Pancreas (tissue), 10 donors: ENCODE measurements at regions of chrX and their contacts with region 1.

Region 1: DNA sequence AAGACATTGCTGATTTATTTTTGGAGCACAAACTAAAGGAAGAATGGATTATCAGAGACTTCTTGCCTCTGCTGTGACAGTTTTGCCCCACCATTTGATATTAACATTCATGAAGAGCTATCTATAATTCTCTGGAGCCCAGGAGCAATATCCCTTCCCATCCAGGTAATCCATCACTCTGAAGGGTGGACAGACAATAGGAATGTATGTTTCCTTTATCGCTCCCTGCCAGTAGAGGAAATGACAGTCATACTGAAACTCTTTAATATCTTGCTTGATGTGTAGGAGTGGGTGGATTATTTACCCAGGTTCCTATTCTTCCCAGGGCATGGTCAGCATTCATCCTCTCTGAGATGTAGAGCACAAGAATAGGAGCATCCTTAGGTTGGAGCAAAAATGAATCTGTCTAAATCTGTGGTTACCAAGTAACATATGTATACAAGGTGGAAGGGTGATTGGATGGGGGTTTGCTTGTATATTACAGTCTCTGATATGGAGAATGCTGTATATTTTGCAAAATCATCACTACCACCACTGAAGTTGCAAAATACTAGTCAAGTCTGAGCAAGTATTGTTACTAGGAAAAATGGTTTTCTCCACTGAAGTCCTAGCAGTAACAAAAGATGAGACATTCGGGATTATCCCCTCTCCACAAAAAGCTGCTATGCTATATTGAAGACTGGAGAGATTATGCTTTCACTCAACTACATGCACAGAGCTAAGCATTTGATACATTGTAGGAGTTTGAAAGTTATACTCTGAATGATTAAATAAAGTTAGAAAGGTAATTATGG is 151.6 kb downstream of the CBLL2 start:
- DNase-seq: no peak
- ATAC-seq: no peak
- H3K4me3 ChIP-seq: no peak overlapping the region
- H3K27ac ChIP-seq: no peak overlapping the region
- H3K4me1 ChIP-seq: no peaks in the 10 kb centered on the region
- H3K27me3 ChIP-seq: no peaks in the 10 kb centered on the region
- CTCF ChIP-seq: no peak

Region 2: DNA sequence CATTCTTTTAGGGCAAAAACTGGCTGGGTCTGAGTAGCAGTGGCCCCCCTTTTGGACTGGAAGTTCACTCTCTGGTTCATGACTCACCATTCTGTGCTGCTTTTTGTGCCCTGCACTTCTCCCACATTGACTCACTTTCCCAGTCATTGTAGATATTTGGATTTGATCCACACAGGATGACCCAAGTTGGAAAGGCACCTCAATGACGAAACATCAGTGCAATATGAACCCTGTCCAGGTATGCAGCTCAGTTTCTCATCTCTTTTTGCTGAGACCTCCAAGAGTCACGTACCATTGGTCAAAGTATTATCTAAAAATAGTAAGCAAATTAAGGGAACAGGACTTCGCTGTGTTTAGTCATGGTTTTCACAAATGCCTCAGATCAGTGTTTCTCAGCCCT is 58.9 kb before region 1 on chrX:
- intact Hi-C with region 1: loop called in 1 of 3 experiments (anchors 10 kb)
- DNase-seq: no peak
- ATAC-seq: no peak
- H3K4me3 ChIP-seq: no peak overlapping the region
- H3K27ac ChIP-seq: no peak overlapping the region
- H3K4me1 ChIP-seq: no peaks in the 10 kb centered on the region
- H3K27me3 ChIP-seq: peaks cover 0 to 6% (median 0%) of the 10 kb centered on the region in 4 donors
- CTCF ChIP-seq: no peak

Region 3: DNA sequence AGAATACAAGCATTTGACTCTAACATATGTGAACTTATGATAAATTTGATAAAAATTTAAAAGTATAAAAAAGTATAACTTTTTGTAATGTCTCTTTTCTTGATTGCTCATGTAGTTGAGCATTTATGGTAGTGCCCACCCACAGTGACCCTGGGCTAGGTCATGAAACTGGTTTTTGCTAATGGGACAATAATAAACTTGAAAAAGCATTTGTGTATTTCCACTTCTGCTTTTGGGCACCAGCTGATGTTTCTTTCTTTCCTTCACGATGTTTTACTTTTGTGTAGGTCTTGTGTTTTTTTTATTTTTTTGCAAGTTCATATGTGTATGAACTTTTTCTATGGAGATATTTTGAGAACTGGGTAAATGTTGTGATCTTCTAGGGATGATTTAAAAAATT is 161.5 kb after region 1 on chrX:
- intact Hi-C with region 1: no loop called
- DNase-seq: no peak
- ATAC-seq: no peak
- H3K4me3 ChIP-seq: no peak overlapping the region
- H3K27ac ChIP-seq: no peak overlapping the region
- H3K4me1 ChIP-seq: no peaks in the 10 kb centered on the region
- H3K27me3 ChIP-seq: peaks cover 0 to 5% (median 0%) of the 10 kb centered on the region in 4 donors
- CTCF ChIP-seq: no peak